ENCODE measurements at regions of chr13 and their contacts with region 1.

Region 1: GRCh38 chr13:99258210-99258860 is at the start of gene GPR18:
- DNase-seq: peak in 1 of 2 donors; percentile 75
- ATAC-seq: peak; percentile 79 to 89 (median 88)
- H3K4me3 ChIP-seq: peak within 1 kb of the TSS; percentile 78
- H3K4me3 Mint-ChIP-seq: peak within 1 kb of the TSS; percentile 93
- H3K27ac ChIP-seq: peak within 1 kb of the TSS; percentile 91
- H3K27ac Mint-ChIP-seq: peak within 1 kb of the TSS; percentile 87 to 97
- H3K4me1 ChIP-seq: peaks cover 18% of the 10 kb centered on the region
- H3K4me1 Mint-ChIP-seq: peaks cover 48 to 64% of the 10 kb centered on the region in 2 donors
- H3K27me3 ChIP-seq: no peaks in the 10 kb centered on the region
- H3K27me3 Mint-ChIP-seq: no peaks in the 10 kb centered on the region
- CTCF ChIP-seq: no peak
- total RNA-seq, gene GPR18: 11.4 to 41.7 (median 25.5) TPM

Region 2: GRCh38 chr13:99176309-99177276 is 81.7 kb before region 1 on chr13:
- intact Hi-C with region 1: loop called (anchors 2 kb)
- DNase-seq: peak; percentile 70 to 91
- ATAC-seq: peak; percentile 90 to 99 (median 98)
- H3K4me3 ChIP-seq: no peak overlapping the region
- H3K4me3 Mint-ChIP-seq: no peak overlapping the region
- H3K27ac ChIP-seq: no peak overlapping the region
- H3K27ac Mint-ChIP-seq: no peak overlapping the region
- H3K4me1 ChIP-seq: peaks cover 28% of the 10 kb centered on the region
- H3K4me1 Mint-ChIP-seq: peaks cover 6 to 7% of the 10 kb centered on the region in 2 donors
- H3K27me3 ChIP-seq: peaks cover 3% of the 10 kb centered on the region
- H3K27me3 Mint-ChIP-seq: peaks cover 21 to 43% of the 10 kb centered on the region in 2 donors
- CTCF ChIP-seq: peak; percentile 86

Region 3: DNA sequence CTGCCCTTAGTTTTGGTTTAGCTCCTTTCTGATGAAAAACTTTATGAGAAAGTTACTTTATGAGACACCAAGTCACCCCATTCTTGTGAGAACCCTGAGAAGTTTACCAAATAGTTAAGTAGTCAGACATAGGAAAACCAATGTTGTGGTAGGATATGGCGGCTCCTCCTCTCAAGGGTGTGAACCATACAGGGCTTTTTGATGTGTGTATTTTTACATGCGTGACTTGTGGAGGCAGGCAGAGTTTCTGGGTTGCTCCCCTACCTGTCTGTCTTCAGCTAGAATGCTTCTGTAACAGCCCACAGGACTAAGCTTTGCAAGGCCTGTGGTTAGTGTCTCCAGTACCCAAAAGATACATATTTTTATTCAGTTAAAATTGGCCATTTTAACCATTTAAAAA is 39.4 kb before region 1 on chr13:
- intact Hi-C with region 1: loop called (anchors 1 kb)
- DNase-seq: peak; percentile 52 to 90
- ATAC-seq: peak; percentile 70 to 83 (median 81)
- H3K4me3 ChIP-seq: no peak overlapping the region
- H3K4me3 Mint-ChIP-seq: peak overlapping the region; percentile 86
- H3K27ac ChIP-seq: peak overlapping the region; percentile 74
- H3K27ac Mint-ChIP-seq: peak overlapping the region; percentile 83 to 89
- H3K4me1 ChIP-seq: peaks cover 64% of the 10 kb centered on the region
- H3K4me1 Mint-ChIP-seq: peaks cover 86% of the 10 kb centered on the region in 2 donors
- H3K27me3 ChIP-seq: no peaks in the 10 kb centered on the region
- H3K27me3 Mint-ChIP-seq: no peaks in the 10 kb centered on the region
- CTCF ChIP-seq: no peak

Region 4: DNA sequence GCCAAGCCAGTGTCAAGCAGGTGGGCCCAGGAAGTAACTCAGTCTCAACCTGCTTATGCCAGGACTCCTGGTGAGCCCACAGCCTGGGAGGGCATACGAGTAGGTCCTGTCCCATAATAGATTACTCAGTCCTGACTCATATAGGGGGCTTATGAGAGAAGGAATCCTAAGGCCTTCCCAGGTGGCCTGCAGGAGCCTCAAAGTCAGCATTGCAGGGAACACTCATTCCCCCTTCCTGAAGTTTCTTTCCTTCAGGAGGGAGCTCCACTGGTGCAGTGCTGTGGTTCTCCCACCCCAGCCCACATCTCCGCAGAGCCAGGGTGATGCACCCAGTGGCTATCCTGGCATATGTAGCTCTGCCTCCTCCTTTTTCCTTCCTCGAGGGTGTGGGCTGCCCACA is 575.9 kb after region 1 on chr13:
- intact Hi-C with region 1: no loop called
- DNase-seq: no peak
- ATAC-seq: no peak
- H3K4me3 ChIP-seq: no peak overlapping the region
- H3K4me3 Mint-ChIP-seq: no peak overlapping the region
- H3K27ac ChIP-seq: no peak overlapping the region
- H3K27ac Mint-ChIP-seq: no peak overlapping the region
- H3K4me1 ChIP-seq: peaks cover 11% of the 10 kb centered on the region
- H3K4me1 Mint-ChIP-seq: peaks cover 18 to 22% of the 10 kb centered on the region in 2 donors
- H3K27me3 ChIP-seq: no peaks in the 10 kb centered on the region
- H3K27me3 Mint-ChIP-seq: peaks cover 0 to 3% of the 10 kb centered on the region in 2 donors
- CTCF ChIP-seq: no peak

Region 5: DNA sequence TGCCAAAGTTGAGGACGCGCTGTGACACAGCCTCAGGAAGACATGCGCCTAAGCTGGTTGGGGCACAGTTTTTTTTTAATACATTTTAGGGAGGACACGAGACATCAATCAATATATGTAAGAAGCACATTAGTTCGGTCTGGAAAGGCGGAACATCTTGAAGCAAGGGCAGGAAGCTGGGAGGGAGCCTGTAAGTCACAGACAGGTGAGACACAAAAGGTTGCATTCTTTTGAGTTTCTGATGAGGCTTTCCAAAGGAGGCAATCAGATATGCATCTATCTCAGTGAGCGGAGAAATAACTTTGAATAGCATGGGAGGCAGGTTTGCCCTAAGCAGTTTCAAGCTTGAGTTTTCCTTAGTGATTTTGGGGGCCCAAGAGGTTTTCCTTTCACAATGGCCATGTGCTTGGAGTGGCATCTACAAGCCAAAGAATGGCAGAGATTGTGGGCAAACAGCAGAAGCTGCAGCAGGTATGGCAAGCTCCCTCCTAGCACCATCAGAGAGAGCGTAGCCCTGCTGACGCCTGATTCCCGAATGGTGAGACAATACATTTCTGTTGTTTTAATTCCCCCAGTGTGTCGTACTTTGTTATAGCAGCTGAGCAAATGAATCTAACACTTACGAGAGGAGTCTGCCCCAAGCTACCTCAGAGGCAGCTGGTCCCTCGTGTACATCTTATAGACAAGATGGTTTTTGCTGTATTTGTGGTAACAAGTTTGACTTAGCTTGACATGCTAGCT is 1515.8 kb after region 1 on chr13:
- intact Hi-C with region 1: no loop called
- DNase-seq: no peak
- ATAC-seq: no peak
- H3K4me3 ChIP-seq: no peak overlapping the region
- H3K4me3 Mint-ChIP-seq: no peak overlapping the region
- H3K27ac ChIP-seq: no peak overlapping the region
- H3K27ac Mint-ChIP-seq: no peak overlapping the region
- H3K4me1 ChIP-seq: no peaks in the 10 kb centered on the region
- H3K4me1 Mint-ChIP-seq: peaks cover 0 to 10% of the 10 kb centered on the region in 2 donors
- H3K27me3 ChIP-seq: no peaks in the 10 kb centered on the region
- H3K27me3 Mint-ChIP-seq: peaks cover 7 to 15% of the 10 kb centered on the region in 2 donors
- CTCF ChIP-seq: no peak